Endothelial cell of umbilical vein (primary cell): ENCODE measurements at regions of chr10 and their contacts with region 1.

Region 1: GRCh38 chr10:73358331-73359279 is at the start of gene CFAP70:
- DNase-seq: peak; percentile 97
- H3K4me3 ChIP-seq: peak within 1 kb of the TSS; percentile 52 to 82 (median 54)
- H3K27ac ChIP-seq: peak within 1 kb of the TSS; percentile 27
- H3K4me1 ChIP-seq: peaks cover 10% of the 10 kb centered on the region
- H3K27me3 ChIP-seq: peaks cover 10 to 11% of the 10 kb centered on the region in 2 experiments
- CTCF ChIP-seq: no peak
- POLR2A ChIP-seq: peak; percentile 53
- total RNA-seq, gene CFAP70: 0.12 and 0.27 TPM in 2 replicates

Region 2: GRCh38 chr10:73252445-73253224 is 106.0 kb before region 1 on chr10 and contains the start of gene MRPS16:
- CTCF ChIA-PET with region 1: no interaction called
- POLR2A ChIA-PET with region 1: interaction called, 4 read pairs
- dilution Hi-C with region 1: no loop called
- intact Hi-C with region 1: loop called (anchors 5 kb)
- DNase-seq: peak; percentile 97
- H3K4me3 ChIP-seq: peak within 1 kb of the TSS; percentile 60 to 91 (median 83)
- H3K27ac ChIP-seq: peak within 1 kb of the TSS; percentile 81
- H3K4me1 ChIP-seq: peaks cover 23% of the 10 kb centered on the region
- H3K27me3 ChIP-seq: no peaks in the 10 kb centered on the region
- CTCF ChIP-seq: no peak
- POLR2A ChIP-seq: peak; percentile 88
- total RNA-seq, gene MRPS16: 86.0 and 94.5 TPM in 2 replicates

Region 3: DNA sequence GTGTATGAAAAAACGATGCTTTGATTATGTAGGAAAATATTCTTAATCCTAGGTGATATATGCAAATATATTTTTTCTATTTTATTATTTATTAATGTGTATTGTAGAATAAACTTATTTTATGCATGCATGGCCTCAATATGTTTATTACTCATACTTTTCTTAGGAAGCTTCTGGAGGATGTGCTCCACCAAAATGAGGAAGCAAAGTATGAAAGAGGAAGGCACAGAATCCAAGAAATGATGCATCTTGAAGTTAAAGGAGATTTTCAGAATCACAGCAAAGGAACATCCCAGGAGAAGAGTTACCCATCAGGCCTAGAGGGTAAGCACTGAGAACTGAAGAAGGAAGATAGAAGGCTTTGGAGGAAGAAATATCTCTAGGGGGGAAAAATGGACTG is 71.2 kb before region 1 on chr10:
- CTCF ChIA-PET with region 1: no interaction called
- POLR2A ChIA-PET with region 1: no interaction called
- dilution Hi-C with region 1: no loop called
- intact Hi-C with region 1: no loop called
- DNase-seq: no peak
- H3K4me3 ChIP-seq: no peak overlapping the region
- H3K27ac ChIP-seq: no peak overlapping the region
- H3K4me1 ChIP-seq: no peaks in the 10 kb centered on the region
- H3K27me3 ChIP-seq: peaks cover 1 to 2% of the 10 kb centered on the region in 2 experiments
- CTCF ChIP-seq: no peak
- POLR2A ChIP-seq: no peak